ENCODE measurements at regions of chr12 and their contacts with region 1.

Region 1: DNA sequence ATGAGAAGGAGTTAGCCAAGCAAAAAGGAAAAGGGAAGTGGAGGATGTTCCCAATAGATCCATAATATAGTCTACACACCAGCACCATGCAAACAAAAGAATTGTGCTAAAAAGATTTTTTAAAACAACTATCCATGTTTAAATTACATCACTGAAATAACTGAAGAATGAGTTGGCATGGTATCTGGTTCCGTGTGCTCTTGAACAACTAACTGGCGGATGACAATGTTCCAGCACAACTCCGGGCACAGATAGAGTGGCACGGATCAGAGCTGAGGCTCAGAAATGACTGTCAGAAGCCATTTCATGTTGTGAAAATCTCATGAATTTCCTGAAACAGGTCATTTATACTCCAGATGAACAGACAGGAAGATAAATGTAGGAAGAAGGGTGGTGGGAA is 153.1 kb downstream of the HMGA2 start:
- DNase-seq: no peak
- H3K4me3 ChIP-seq: no peak overlapping the region
- H3K27ac ChIP-seq: no peak overlapping the region
- H3K4me1 ChIP-seq: no peaks in the 10 kb centered on the region
- H3K27me3 ChIP-seq: no peaks in the 10 kb centered on the region
- CTCF ChIP-seq: no peak

Region 2: GRCh38 chr12:66087365-66087943 is 110.1 kb after region 1 on chr12:
- intact Hi-C with region 1: loop called (anchors 10 kb)
- DNase-seq: peak in 1 of 2 donors; percentile 79
- H3K4me3 ChIP-seq: no peak overlapping the region
- H3K27ac ChIP-seq: no peak overlapping the region
- H3K4me1 ChIP-seq: peaks cover 0 to 5% of the 10 kb centered on the region in 2 donors
- H3K27me3 ChIP-seq: no peaks in the 10 kb centered on the region
- CTCF ChIP-seq: peak; percentile 51 to 79 (median 63)

Measured in ascending aorta (tissue), 2 donors.